Dorsolateral prefrontal cortex (tissue), 120 donors: ENCODE measurements at regions of chr13 and their contacts with region 1.

Region 1: DNA sequence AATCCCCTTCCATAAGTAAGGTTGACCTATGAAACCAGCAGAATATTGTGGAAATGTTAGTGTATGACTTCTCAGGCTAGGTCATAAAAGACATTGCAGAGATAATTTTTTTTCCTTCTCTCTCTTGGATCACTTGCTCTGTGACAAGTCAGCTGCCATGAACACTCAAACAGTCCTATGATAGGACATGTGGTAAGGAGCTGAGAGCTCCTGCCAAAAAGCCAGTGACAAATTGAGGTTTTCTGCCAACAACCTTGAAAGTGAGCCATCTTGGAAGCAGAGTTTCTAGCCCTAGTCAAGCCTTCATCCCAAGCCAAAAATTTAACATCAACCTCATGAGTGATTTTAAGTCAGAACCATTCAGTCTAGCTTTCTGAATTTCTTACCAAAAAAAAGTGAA is 270.9 kb upstream of the NBEA start:
- DNase-seq: peak in 2 of 10 donors; percentile 20 to 70
- H3K4me3 ChIP-seq: no peak overlapping the region
- H3K27ac ChIP-seq: peak overlapping the region in 22 of 59 donors; percentile 0 to 79 (median 42)
- H3K27me3 ChIP-seq: no peaks in the 10 kb centered on the region
- CTCF ChIP-seq: no peak

Region 2: GRCh38 chr13:33537026-33537425 is 1134.1 kb before region 1 on chr13:
- intact Hi-C with region 1: no loop called
- DNase-seq: no peak
- H3K4me3 ChIP-seq: peak overlapping the region in 48 of 59 donors; percentile 0 to 55 (median 26)
- H3K27ac ChIP-seq: peak overlapping the region in 58 of 59 donors; percentile 5 to 100 (median 82)
- H3K27me3 ChIP-seq: no peaks in the 10 kb centered on the region
- CTCF ChIP-seq: peak in 1 of 56 donors; percentile 9

Region 3: DNA sequence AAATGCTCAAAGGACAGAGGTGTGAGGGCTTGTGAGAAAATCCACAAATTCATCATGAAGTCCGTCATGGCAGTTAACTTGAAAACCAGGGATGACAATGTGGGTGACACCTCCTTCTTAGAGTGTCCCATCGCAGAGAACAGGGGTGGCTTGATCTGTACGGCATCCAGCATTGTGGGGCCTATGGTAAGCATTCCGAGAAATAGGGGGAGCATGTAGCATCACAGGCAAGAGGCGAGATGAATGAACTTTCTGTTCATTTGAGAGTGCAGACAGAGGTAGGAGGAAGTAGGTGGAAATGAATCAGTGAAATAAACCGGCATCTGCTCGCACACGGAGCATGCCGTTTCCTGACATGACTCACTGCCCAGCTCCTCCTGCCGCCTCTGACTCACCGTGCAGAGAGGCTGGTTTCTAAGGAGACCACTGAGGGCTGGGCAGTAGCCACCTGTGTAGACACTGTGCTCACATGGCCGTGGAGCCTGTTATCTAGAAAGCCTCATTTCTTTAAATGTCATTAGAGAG is 514.2 kb before region 1 on chr13:
- intact Hi-C with region 1: loop called in 1 of 2 experiments (anchors 2 kb)
- DNase-seq: peak in 9 of 10 donors; percentile 31 to 88 (median 66)
- H3K4me3 ChIP-seq: peak overlapping the region in 1 of 59 donors; percentile 2
- H3K27ac ChIP-seq: peak overlapping the region in 41 of 59 donors; percentile 2 to 81 (median 59)
- H3K27me3 ChIP-seq: no peaks in the 10 kb centered on the region
- CTCF ChIP-seq: no peak

Region 4: DNA sequence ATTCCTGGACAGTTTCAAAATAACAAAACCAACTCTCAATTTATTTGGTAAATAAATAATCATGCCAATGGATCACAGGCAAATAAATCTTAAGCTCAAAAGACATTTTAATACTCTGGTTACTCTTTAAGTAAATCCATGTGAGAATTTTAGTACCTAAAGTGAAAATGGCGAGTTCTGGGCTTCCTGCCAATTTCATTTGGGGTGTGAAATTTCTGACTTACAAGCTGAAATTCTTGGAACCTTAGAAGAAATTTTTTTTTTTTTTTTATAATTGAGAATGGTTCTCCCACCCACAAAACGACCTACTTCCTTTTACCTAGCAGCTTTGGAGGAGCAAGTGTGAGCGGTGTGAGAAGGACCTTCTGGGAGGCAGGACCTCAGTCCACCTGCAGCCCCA is 83.6 kb before region 1 on chr13:
- intact Hi-C with region 1: loop called in 1 of 2 experiments (anchors 5 kb)
- DNase-seq: peak in 2 of 10 donors; percentile 25 to 72
- H3K4me3 ChIP-seq: no peak overlapping the region
- H3K27ac ChIP-seq: peak overlapping the region in 16 of 59 donors; percentile 6 to 70 (median 34)
- H3K27me3 ChIP-seq: no peaks in the 10 kb centered on the region
- CTCF ChIP-seq: no peak

Region 5: DNA sequence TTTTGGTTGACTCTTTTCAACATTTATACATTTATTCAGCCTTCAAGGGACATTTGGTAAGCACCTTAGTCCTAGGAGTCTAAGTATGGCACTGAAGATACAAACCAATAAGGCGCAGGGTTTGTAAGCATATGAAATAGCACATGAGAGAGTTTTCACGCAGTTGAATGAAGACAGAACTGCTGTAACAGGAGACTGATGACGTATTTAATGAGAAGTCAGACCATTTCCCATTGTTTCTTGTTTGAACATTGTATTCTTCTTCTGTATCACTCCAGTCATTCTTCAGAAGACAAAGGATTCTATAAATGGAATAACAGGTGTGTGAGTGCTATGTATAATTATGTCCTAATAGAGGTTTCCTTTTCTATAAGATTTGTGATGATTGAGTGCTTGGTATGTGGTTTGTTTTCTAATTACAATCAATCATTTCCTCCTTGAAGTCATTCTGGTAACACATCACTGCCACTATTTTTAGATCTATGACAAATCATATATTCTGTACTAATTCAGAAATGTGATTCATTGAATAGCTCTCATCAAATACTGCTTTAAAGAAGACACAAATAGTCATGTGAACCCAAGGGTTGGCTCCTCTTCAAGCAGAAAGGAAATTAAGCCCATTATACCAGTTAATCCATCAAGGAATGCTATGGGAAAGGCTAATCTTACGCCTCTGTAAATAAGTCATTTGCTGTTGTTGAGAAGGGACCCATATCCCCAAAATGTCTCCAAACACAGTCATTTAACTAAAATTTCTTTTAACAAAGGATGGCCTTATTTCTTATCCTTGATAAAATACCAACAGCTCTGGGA is 48.1 kb after region 1 on chr13:
- intact Hi-C with region 1: no loop called
- DNase-seq: no peak
- H3K4me3 ChIP-seq: no peak overlapping the region
- H3K27ac ChIP-seq: no peak overlapping the region
- H3K27me3 ChIP-seq: no peaks in the 10 kb centered on the region
- CTCF ChIP-seq: no peak

Region 6: DNA sequence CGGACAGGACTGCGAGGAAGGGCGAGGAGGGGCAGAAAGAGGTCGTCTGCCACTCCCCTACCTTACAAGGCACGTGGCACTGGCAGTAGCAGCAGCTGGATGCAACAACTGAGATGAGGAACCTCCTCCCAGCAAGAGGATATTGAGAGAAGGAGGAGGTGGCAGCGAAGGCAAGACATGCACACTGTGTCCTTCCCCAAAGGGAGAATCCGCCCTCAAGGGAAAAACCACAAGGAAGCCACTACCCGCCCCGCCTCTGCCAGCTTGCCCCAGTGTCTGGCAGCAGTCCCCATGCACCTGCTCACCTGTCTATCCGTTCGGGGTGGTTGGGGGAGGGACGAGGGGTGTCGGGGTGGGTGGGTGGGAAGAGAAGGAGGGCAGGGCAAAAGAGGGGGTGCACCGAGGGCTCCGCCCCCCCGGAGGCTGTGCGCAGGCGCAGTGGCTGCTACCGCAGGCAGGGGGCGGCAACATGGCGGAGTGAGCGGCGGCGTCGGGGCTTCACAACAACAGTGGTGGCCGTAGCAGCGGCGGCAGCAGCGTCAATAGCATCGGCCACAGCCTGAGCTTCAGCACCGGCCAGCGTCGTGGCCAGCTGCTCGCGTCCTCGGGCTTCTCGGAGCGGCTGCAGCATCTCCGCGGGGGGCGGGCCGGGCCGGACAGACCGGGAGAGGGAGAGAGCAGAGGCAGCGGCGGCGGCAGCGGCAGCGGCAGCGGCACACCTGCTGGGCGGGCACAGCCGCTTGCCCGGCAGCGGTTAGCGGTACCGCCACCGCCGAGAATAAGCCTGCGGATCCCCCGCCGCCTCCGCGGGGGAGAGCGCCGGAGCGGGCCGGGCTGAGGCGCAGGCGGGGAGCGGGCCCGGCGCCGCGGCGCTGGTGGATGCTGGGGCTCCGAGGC is 270.9 kb after region 1 on chr13 and contains the start of gene NBEA:
- intact Hi-C with region 1: loop called in 1 of 2 experiments (anchors 5 kb)
- DNase-seq: peak; percentile 61 to 89 (median 77)
- H3K4me3 ChIP-seq: peak within 1 kb of the TSS; percentile 63 to 95 (median 86)
- H3K27ac ChIP-seq: peak within 1 kb of the TSS in 58 of 59 donors; percentile 25 to 95 (median 85)
- H3K27me3 ChIP-seq: no peaks in the 10 kb centered on the region
- CTCF ChIP-seq: peak in 51 of 56 donors; percentile 13 to 70 (median 48)
- total RNA-seq, gene NBEA: 41.1 to 110 (median 86.2) TPM

Region 7: GRCh38 chr13:35107535-35107934 is 436.4 kb after region 1 on chr13:
- intact Hi-C with region 1: no loop called
- DNase-seq: no peak
- H3K4me3 ChIP-seq: no peak overlapping the region
- H3K27ac ChIP-seq: no peak overlapping the region
- H3K27me3 ChIP-seq: no peaks in the 10 kb centered on the region
- CTCF ChIP-seq: no peak